ENCODE measurements at regions of chr10 and their contacts with region 1.

Region 1: GRCh38 chr10:32346134-32346550 is 816 bp downstream of the EPC1 start:
- DNase-seq: peak; percentile 98
- ATAC-seq: peak; percentile 88
- H3K4me3 Mint-ChIP-seq: peak overlapping the region; percentile 93
- H3K27ac Mint-ChIP-seq: peak overlapping the region; percentile 100
- H3K4me1 Mint-ChIP-seq: peaks cover 61% of the 10 kb centered on the region
- H3K27me3 Mint-ChIP-seq: no peaks in the 10 kb centered on the region

Region 2: GRCh38 chr10:32237644-32238345 is 108.3 kb before region 1 on chr10:
- CTCF ChIA-PET with region 1: no interaction called
- DNase-seq: no peak
- ATAC-seq: no peak
- H3K4me3 Mint-ChIP-seq: no peak overlapping the region
- H3K27ac Mint-ChIP-seq: no peak overlapping the region
- H3K4me1 Mint-ChIP-seq: no peaks in the 10 kb centered on the region
- H3K27me3 Mint-ChIP-seq: no peaks in the 10 kb centered on the region

Region 3: GRCh38 chr10:32293581-32293980 is 52.6 kb before region 1 on chr10:
- CTCF ChIA-PET with region 1: no interaction called
- DNase-seq: no peak
- ATAC-seq: no peak
- H3K4me3 Mint-ChIP-seq: no peak overlapping the region
- H3K27ac Mint-ChIP-seq: no peak overlapping the region
- H3K4me1 Mint-ChIP-seq: peaks cover 9% of the 10 kb centered on the region
- H3K27me3 Mint-ChIP-seq: no peaks in the 10 kb centered on the region

Region 4: DNA sequence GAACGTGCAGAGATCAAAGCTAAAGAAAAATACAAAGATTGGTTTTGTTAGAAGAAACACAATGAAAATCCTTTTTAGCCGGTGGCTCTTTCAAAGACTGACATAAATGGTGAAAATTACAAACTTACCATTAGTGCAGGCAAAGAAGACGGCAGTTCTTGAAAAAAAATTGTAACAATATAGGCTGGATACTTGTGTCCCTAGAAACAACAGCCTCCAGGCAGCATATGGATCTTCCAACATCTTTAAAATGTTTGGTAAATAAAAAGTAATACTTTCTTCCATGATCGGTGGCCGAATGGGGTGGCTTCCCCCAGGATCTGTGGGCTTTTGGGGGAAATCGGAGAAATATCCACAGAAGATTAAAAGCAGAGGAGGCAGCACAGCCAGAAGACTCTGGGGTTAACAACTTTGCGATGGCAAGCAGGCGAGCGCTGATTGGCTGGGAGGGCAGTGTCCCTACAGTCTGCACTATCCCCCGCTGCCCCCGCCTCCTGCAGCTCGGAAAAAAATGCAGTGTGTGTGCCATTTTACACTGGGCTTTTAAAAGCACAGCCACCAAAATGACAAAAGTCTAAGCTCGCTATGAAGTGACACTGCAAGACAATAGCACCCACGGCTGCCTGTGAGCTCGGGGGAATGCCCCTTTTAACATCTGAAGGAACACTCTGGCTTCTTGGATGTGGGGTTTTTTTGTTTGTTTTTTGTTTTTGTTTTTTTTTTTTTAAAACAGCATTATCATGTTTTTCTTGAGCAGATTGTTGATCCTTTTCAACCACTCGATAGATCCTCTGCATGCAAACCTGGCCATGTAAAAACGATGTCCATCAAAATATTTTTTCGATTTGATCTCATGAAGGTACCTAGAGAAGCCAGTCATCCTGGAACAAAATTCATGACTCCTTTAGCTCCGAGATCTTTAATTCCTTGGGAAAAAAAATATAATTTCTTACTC is 32.5 kb after region 1 on chr10:
- CTCF ChIA-PET with region 1: interaction called, 15 read pairs
- DNase-seq: peak; percentile 97
- ATAC-seq: peak; percentile 98
- H3K4me3 Mint-ChIP-seq: no peak overlapping the region
- H3K27ac Mint-ChIP-seq: no peak overlapping the region
- H3K4me1 Mint-ChIP-seq: peaks cover 23% of the 10 kb centered on the region
- H3K27me3 Mint-ChIP-seq: no peaks in the 10 kb centered on the region

Region 5: GRCh38 chr10:32471232-32471631 is 125.1 kb after region 1 on chr10:
- CTCF ChIA-PET with region 1: no interaction called
- DNase-seq: no peak
- ATAC-seq: no peak
- H3K4me3 Mint-ChIP-seq: no peak overlapping the region
- H3K27ac Mint-ChIP-seq: no peak overlapping the region
- H3K4me1 Mint-ChIP-seq: no peaks in the 10 kb centered on the region
- H3K27me3 Mint-ChIP-seq: no peaks in the 10 kb centered on the region

Measured in activated CD8-positive, alpha-beta memory T cell treated with anti-CD3 and anti-CD28 coated beads, Interleukin-2, amount 10 ng/mL, durations not matched to agents 7 days and 5 days (primary cell).